Activated naive CD8-positive, alpha-beta T cell treated with anti-CD3 and anti-CD28 coated beads, Interleukin-2, amount 10 ng/mL, durations not matched to agents 7 days and 5 days (primary cell): ENCODE measurements at regions of chr17 and their contacts with region 1.

Region 1: DNA sequence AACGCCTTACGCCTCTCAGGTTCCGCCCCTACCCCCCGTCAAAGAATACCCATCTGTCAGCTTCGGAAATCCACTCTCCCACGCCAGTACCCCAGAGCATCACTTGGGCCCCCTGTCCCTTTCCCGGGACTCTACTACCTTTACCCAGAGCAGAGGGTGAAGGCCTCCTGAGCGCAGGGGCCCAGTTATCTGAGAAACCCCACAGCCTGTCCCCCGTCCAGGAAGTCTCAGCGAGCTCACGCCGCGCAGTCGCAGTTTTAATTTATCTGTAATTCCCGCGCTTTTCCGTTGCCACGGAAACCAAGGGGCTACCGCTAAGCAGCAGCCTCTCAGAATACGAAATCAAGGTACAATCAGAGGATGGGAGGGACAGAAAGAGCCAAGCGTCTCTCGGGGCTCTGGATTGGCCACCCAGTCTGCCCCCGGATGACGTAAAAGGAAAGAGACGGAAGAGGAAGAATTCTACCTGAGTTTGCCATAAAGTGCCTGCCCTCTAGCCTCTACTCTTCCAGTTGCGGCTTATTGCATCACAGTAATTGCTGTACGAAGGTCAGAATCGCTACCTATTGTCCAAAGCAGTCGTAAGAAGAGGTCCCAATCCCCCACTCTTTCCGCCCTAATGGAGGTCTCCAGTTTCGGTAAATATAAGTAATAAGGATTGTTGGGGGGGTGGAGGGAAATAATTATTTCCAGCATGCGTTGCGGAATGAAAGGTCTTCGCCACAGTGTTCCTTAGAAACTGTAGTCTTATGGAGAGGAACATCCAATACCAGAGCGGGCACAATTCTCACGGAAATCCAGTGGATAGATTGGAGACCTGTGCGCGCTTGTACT is at the start of gene BRCA1:
- DNase-seq: peak; percentile 89
- ATAC-seq: peak; percentile 99
- H3K4me3 Mint-ChIP-seq: peak within 1 kb of the TSS; percentile 97
- H3K27ac Mint-ChIP-seq: peak within 1 kb of the TSS; percentile 98
- H3K4me1 Mint-ChIP-seq: peaks cover 25% of the 10 kb centered on the region
- H3K27me3 Mint-ChIP-seq: no peaks in the 10 kb centered on the region
- total RNA-seq, gene BRCA1: 53.5 to 61.4 TPM

Region 2: DNA sequence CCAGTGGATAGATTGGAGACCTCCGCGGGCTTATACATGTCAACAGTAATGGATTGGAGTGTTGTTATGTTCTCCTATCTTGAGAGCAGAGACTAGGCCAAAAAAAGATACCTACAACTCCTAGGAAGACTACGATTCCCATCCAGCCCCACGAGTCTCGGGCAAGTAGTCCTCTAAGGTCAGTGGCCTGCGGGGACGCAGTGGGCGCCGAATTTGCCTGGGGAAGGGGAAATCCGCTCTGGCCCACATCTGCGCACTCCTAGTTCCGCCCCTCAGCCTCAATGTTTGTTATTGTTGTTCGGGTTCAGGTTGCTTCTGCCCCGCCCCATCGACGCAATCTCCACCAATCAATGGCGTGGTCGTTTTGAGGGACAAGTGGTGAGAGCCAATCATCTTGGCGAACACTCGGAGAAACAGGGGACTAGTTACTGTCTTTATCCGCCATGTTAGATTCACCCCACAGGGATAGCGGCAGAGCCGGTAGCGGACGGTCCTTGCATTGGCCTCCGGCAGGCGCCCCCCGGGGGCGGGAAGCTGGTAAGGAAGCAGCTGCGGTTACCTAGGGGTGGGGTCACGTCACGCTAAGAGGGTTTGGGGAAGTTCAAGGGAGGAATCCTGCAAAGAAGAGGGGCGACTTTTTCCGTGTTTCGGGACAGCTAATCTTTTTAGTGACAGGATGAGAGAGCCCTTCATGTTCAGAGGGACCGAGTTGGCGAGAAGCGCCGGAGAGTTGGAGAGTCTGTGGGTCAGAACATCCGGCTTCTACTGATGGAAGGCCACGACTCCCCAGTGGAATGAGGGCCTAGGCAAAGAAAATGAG is 45.6 kb after region 1 on chr17 and contains the start of gene NBR1:
- POLR2A ChIA-PET with region 1: interaction called, 27 read pairs
- DNase-seq: peak; percentile 89
- ATAC-seq: peak; percentile 86
- H3K4me3 Mint-ChIP-seq: no peak within 1 kb of the TSS
- H3K27ac Mint-ChIP-seq: no peak within 1 kb of the TSS
- H3K4me1 Mint-ChIP-seq: peaks cover 30% of the 10 kb centered on the region
- H3K27me3 Mint-ChIP-seq: no peaks in the 10 kb centered on the region
- total RNA-seq, gene NBR1: 60.5 to 67.4 TPM

Region 3: DNA sequence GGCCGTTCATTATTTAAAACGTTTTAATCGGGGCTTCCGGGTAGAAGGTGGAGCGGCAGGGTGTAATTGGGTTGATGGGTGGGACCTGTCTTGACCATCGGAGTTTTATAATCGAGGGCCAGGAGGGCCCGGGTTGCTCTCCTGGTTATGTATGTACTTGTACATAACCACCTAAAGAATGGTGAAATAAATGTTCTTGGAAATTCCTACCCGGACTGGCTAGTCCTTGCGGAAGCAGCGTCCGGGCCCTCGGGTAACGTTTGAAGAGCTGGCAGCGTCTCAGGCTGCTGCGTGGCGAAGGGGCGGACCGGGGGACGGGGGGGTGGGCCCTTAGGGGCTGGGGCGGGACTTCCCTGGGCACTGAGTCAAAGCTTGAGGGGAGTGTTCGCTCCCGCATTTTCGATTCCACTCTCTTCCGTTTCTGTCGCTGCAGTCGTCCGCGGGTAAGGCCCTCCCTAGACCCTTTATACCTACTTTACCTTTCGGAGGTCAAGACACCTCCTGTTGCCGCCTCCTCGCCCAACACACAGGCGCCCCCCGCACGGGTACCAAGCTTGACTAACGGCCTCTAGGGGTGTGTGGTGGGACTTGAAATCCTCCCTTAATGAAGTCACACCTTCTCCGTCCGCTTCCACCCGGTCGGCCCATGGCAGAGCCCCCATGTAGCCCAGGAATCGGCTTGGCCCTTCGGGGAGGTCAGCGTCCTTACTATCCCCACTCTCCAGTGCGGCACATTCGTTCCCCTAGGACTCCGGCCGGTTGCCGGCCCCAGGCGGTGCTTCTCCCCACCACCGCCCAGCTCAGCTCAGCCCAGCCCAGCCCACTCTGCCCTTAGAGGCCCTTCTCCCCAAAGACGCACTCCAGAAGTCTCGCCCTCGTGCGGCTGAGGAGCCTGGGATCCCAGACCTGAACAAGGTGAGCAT is 86.4 kb after region 1 on chr17 and contains the start of gene TMEM106A:
- POLR2A ChIA-PET with region 1: interaction called, 11 read pairs
- DNase-seq: peak; percentile 80
- ATAC-seq: peak; percentile 90
- H3K4me3 Mint-ChIP-seq: peak within 1 kb of the TSS; percentile 98
- H3K27ac Mint-ChIP-seq: peak within 1 kb of the TSS; percentile 94
- H3K4me1 Mint-ChIP-seq: peaks cover 18% of the 10 kb centered on the region
- H3K27me3 Mint-ChIP-seq: no peaks in the 10 kb centered on the region
- total RNA-seq, gene TMEM106A: 20.3 TPM